AG04449 (cell line): ENCODE measurements at regions of chr11 and their contacts with region 1.

Region 1: GRCh38 chr11:96342961-96343711 is at the start of gene MAML2:
- DNase-seq: peak; percentile 76
- H3K4me3 ChIP-seq: peak within 1 kb of the TSS; percentile 81
- CTCF ChIP-seq: peak; percentile 94

Region 2: DNA sequence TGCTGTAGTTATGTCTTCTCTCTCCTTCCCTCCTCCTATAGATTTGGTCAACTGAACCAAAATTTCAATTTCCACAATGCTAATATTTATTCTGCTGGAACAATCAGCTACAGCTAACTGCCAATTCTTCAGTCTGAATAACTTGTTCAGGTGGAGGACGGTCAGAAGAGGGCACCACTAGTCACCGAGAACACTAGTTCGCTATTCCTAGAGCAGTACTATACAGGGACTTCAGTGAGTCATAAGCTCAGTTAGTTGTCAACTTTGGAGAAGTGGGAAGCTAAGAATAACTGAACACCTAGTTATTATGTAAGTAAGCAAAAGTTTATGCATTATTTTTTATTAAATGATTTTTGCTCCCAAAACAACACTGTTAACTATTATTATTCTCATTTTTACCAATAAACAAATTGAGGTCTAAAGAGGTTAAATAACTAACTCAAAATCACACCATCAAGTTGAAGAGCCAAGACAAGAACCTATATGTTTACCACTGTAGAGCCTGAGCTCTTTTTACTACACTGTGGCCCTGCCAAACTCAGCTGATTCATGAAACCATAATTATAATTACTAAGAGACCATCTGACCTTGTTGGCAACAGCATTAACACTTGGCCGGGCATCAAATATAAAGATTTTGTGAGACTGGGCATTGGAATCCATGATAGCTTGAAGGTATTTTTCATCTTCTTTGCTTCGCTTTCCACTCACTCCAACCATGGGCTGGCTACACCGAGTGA is 493.9 kb before region 1 on chr11:
- CTCF ChIA-PET with region 1: interaction called, 13 read pairs
- POLR2A ChIA-PET with region 1: interaction called, 3 read pairs
- DNase-seq: no peak
- H3K4me3 ChIP-seq: no peak overlapping the region
- CTCF ChIP-seq: peak; percentile 44

Region 3: GRCh38 chr11:96054870-96055705 is 288.0 kb before region 1 on chr11:
- CTCF ChIA-PET with region 1: interaction called, 57 read pairs
- POLR2A ChIA-PET with region 1: no interaction called
- DNase-seq: no peak
- H3K4me3 ChIP-seq: no peak overlapping the region
- CTCF ChIP-seq: peak; percentile 46

Region 4: DNA sequence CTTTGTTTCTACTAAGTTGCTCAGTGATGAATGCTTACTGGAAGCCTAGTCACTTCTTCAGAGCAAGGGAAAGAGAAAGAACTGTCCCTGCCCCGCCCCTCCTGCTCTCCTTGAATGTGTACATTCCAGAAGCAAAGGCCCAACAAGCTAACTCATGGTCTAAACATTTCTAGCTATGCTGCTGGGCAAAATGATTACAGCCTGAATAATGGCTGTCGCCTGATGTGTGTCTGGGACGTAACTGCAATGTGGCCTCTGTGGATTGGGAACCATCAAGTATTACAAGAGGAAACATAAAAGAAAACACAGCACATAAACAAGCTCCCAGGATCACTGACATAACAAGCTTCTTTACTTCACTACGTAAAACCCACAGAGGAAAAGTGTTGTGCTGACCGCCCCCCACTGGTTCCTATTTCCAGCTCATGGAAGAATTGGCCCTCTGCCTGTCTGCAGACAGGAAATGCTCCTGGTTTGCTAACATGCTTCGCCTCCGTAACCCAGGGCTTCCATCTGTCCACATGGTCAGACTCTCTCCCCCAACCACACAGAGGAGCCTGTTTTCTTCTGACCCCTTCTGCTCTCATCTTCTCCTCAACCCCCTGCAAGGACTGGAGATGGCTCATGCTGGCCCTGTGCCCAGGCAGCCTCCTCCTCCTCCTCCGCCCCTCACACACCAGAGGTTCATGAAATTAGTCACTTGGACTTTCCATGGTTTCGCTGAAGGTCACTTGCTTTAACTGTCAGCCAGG is 187.3 kb before region 1 on chr11:
- CTCF ChIA-PET with region 1: interaction called, 12 read pairs
- POLR2A ChIA-PET with region 1: interaction called, 4 read pairs
- DNase-seq: peak; percentile 91
- H3K4me3 ChIP-seq: peak overlapping the region; percentile 7
- CTCF ChIP-seq: peak; percentile 35

Region 5: DNA sequence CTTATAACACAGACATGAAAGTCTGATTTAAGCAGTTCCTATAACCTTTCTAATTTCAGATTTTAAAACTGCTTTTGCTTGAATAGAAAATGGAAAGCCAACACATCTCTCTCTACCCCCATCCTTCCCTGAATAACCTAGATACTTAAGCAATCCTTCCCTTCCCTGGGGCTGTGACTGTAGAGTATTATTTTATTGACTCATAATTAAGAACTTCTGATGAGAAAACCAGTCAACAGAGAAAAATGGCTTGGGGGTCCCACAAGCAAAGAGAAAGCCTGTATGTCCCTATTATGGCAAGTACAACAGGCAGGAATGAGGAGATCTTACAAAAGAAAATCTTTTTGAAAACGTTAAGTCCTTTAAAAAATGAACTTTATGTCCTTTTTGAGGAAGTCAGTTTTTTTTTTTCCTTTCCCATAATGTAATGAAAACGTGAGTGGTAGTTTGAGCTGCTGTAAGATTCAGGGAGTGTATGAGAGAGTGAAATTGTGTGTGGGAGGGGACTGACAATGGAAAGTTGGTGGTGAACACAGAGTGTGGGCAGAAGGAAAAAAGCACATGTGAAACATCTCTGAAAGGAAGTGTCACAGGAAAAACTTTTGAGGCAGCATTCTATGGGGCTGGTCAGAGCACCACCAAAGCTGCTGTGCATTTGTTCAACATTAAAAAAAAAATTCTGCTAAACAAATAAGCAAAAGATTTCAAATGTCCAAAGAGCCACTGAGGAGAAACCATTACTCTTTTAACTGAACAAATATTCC is 154.7 kb before region 1 on chr11:
- CTCF ChIA-PET with region 1: interaction called, 13 read pairs
- POLR2A ChIA-PET with region 1: no interaction called
- DNase-seq: no peak
- H3K4me3 ChIP-seq: no peak overlapping the region
- CTCF ChIP-seq: no peak

Region 6: DNA sequence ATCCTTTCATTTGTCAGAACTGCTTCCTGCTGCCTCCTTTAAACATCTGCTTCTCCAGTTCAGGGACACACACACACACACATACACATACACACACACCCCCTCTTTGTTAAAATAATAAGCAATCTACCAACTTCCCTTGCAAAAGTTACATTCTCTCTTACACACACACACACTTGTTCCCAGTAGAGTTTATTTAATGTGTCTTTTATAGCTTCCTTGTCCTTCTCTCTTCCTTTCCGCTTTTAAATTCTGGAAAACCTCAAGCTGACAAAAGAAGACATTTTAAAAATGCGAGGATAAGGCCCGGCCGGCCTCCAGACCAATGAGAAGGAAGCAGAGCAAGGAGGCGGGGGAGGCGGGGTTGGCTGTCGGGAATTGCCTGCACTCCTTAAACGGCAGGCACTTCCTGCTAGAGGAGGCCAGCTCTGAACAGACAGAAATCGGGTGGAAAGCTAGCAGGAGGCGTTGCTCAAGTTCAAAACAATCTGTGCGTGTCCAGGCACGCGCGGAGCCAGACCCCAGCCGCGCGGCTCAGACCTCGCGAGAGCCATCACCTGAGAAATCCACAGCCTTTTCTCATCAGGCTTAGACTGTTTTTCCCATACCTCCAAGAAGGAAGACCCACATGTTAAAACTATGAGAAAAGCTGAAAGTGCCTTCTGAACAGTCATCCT is 100.0 kb before region 1 on chr11:
- CTCF ChIA-PET with region 1: interaction called, 24 read pairs
- POLR2A ChIA-PET with region 1: interaction called, 7 read pairs
- DNase-seq: peak; percentile 91
- H3K4me3 ChIP-seq: peak overlapping the region; percentile 51
- CTCF ChIP-seq: no peak

Region 7: GRCh38 chr11:96357794-96358193 is 14.7 kb after region 1 on chr11:
- CTCF ChIA-PET with region 1: interaction called, 13 read pairs
- POLR2A ChIA-PET with region 1: no interaction called
- DNase-seq: no peak
- H3K4me3 ChIP-seq: no peak overlapping the region
- CTCF ChIP-seq: no peak

Region 8: GRCh38 chr11:96642584-96642983 is 299.4 kb after region 1 on chr11:
- CTCF ChIA-PET with region 1: no interaction called
- POLR2A ChIA-PET with region 1: no interaction called
- DNase-seq: no peak
- H3K4me3 ChIP-seq: no peak overlapping the region
- CTCF ChIP-seq: no peak